BJ (cell line): ENCODE measurements at regions of chr16 and their contacts with region 1.

Region 1: DNA sequence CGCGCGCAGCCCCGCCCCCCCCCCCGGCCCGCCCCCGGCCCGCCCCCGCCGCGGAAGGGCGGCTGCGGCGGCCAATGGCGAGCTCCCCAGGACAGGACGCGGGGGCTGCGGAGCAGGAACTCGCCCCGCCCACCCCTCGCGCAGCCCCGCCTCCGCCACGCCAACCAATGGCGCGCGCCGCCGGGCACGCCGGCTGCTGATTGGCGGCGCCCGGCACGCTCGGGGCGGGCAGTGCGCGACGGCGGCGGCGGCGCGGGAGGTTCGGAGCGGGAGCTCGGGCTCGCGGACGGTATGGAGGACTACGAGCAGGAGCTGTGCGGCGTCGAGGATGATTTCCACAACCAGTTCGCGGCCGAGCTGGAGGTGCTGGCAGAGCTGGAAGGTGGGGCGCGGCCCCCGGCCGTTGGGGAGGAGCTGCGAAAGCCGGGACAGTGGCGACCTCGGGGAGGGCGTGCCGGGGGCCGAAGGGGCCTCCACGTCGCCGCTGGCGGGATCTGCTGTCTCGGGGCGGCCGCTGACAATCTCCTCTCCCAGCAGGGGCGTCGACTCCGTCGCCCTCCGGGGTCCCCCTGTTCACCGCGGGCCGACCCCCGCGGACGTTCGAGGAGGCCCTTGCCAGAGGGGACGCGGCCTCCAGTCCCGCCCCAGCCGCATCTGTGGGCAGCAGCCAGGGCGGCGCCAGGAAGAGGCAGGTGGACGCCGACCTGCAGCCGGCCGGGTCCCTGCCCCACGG is at the start of gene CHTF18:
- DNase-seq: peak; percentile 35
- H3K4me3 ChIP-seq: peak within 1 kb of the TSS; percentile 96
- H3K27me3 ChIP-seq: no peaks in the 10 kb centered on the region
- CTCF ChIP-seq: no peak
- polyA plus RNA-seq, gene CHTF18: 2.6 and 6.1 TPM in 2 replicates

Region 2: GRCh38 chr16:483341-484075 is 305.1 kb before region 1 on chr16:
- CTCF ChIA-PET with region 1: no interaction called
- POLR2A ChIA-PET with region 1: no interaction called
- DNase-seq: no peak
- H3K4me3 ChIP-seq: no peak overlapping the region
- H3K27me3 ChIP-seq: no peaks in the 10 kb centered on the region
- CTCF ChIP-seq: no peak

Region 3: DNA sequence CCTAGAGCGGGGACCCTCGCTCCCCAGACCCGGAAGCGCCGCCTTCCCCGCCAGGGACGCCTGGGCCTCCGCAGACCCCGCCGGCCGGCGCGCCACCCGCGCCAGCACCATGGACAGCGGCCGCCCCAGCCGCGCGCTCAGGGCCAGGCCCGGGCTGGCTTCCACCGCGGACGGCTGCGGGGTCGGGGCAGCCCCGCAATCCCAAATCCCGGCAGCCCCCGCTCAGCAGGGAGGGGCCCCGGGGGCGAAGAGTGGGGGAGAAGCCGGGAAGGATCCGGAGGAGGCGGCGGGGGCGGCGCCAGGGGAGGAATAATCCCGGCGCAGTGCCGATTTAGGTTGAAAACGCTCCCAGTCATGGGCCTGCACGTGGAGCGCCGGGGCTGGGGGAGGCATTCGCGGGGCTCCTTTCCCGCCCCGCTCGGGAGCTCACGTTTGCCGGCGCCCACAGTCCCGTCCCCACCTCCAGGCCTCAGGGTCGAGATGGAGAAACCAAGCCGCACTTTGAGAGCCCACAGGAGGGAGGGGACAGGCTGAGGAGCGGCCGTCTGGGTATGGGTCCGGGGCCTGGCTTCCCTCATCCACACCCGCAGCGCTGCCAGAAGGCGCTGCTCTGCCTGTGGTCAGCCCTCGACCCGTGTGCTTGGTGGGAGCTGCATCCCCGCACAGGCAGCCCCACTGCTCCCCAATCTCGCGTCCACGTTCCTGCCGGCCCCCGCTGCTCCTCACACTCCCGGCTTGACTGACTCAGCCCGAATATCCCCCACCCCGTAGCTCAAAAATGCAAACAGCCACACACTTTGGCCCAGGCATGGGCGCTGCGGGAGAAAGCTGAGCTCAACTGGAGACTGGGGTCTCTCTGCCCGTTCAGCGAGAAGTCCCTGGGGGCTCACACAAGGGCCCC is 87.6 kb before region 1 on chr16:
- CTCF ChIA-PET with region 1: interaction called, 13 read pairs
- POLR2A ChIA-PET with region 1: no interaction called
- DNase-seq: no peak
- H3K4me3 ChIP-seq: no peak overlapping the region
- H3K27me3 ChIP-seq: peaks cover 29% of the 10 kb centered on the region
- CTCF ChIP-seq: no peak

Region 4: GRCh38 chr16:714558-715476 is 73.7 kb before region 1 on chr16 and contains the start of gene METRN:
- CTCF ChIA-PET with region 1: interaction called, 120 read pairs
- POLR2A ChIA-PET with region 1: no interaction called
- DNase-seq: no peak
- H3K4me3 ChIP-seq: peak within 1 kb of the TSS; percentile 64
- H3K27me3 ChIP-seq: no peaks in the 10 kb centered on the region
- CTCF ChIP-seq: no peak
- polyA plus RNA-seq, gene METRN: 33.7 and 40.3 TPM in 2 replicates

Region 5: GRCh38 chr16:720990-721764 is 67.4 kb before region 1 on chr16 and contains the start of gene ANTKMT:
- CTCF ChIA-PET with region 1: interaction called, 120 read pairs
- POLR2A ChIA-PET with region 1: no interaction called
- DNase-seq: no peak
- H3K4me3 ChIP-seq: peak within 1 kb of the TSS; percentile 74
- H3K27me3 ChIP-seq: no peaks in the 10 kb centered on the region
- CTCF ChIP-seq: no peak
- polyA plus RNA-seq, gene ANTKMT: 7.7 and 10.7 TPM in 2 replicates

Region 6: DNA sequence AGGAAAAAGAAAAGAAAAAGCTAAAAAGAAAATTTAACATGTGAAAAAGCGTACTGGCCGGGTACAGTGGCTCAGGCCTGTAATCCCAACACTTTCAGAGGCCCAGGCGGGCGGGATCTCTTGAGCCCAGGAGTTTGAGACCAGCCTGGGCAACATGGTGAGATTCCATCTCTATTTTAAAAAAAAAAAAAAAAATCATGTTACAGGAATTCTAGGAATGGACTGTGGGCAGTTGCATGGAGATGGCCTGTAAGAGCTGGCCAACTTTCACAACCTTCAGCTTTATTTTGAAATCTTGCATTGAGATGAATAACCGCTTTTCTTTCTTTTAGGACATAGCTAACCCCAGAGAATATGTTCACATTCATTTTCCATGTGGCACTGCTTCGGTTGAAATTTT is 39.6 kb before region 1 on chr16:
- CTCF ChIA-PET with region 1: interaction called, 11 read pairs
- POLR2A ChIA-PET with region 1: no interaction called
- DNase-seq: peak; percentile 73
- H3K4me3 ChIP-seq: no peak overlapping the region
- H3K27me3 ChIP-seq: 0 out of 2 replicates have a peak, but pooled peaks cover 3% of the 10 kb centered on the region
- CTCF ChIP-seq: no peak

Region 7: DNA sequence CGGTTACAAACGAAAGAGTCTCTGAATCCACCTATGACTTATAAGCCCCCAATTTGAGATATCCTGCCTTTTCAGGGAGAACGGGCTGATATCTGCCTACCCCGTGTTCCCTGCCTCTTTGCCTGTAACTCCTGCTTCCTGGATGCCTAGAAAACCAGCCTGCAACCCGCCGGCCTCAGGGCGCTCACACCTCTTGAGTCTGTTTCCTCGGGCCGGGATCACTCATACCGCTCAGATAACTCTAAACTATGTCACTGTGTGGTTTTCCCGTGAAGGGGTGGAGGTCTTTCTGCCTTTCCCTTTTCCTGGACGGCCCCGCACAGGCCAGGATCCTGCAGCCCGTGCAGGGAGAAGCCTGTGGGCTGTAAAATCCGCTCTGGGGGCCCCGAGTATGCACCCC is 10.7 kb before region 1 on chr16:
- CTCF ChIA-PET with region 1: interaction called, 18 read pairs
- POLR2A ChIA-PET with region 1: no interaction called
- DNase-seq: no peak
- H3K4me3 ChIP-seq: no peak overlapping the region
- H3K27me3 ChIP-seq: no peaks in the 10 kb centered on the region
- CTCF ChIP-seq: no peak

Region 8: GRCh38 chr16:861446-861845 is 72.9 kb after region 1 on chr16:
- CTCF ChIA-PET with region 1: no interaction called
- POLR2A ChIA-PET with region 1: no interaction called
- DNase-seq: no peak
- H3K4me3 ChIP-seq: no peak overlapping the region
- H3K27me3 ChIP-seq: no peaks in the 10 kb centered on the region
- CTCF ChIP-seq: no peak